CD4-positive, alpha-beta T cell (primary cell): ENCODE measurements at regions of chr11 and their contacts with region 1.

Region 1: GRCh38 chr11:133947321-133947756 is 9.4 kb downstream of the IGSF9B start:
- DNase-seq: peak; percentile 41 to 85 (median 62)
- ATAC-seq: peak; percentile 32
- H3K4me3 ChIP-seq: peak overlapping the region; percentile 30
- H3K4me3 Mint-ChIP-seq: peak overlapping the region; percentile 68
- H3K27ac ChIP-seq: peak overlapping the region in 1 of 2 donors; percentile 47
- H3K27ac Mint-ChIP-seq: peak overlapping the region; percentile 89
- H3K4me1 ChIP-seq: peaks cover 69% of the 10 kb centered on the region
- H3K4me1 Mint-ChIP-seq: peaks cover 69% of the 10 kb centered on the region
- H3K27me3 ChIP-seq: no peaks in the 10 kb centered on the region
- H3K27me3 Mint-ChIP-seq: peaks cover under 1% of the 10 kb centered on the region
- CTCF ChIP-seq: peak; percentile 49

Region 2: DNA sequence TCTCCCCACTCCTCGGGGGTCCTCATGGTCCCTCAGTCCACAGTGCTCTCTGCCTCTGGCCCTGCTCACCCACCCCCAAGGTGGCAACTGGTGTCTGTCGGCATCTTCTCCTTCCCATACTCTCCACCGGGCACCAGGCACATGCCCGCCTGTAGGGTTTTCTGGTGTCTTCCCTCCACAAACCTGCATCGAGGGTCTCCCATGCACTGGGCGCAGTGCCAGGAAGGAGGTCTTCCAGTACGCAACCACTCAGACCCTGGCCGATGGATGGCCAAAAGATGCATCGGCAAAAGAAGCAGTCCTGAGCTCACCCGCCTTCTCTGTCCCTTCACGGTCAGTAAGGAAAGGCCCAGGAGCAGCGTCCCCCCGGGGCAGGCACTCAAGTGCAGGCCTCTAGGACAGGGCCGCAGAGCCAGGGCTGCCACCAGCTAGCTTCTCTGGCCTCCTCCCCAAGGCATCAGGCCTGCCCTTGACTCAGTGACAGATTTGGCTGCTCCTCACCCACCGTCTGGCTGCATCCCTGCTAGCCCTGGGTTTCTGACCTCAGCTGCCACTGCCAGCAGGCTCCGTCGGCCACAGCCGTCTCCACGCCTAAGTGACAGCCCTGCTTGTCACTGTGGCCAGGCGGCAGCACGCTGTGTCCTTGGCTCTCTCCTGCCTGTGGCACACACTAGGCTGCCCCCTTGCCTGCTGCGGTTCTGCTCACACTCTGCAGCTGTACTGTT is 41.5 kb after region 1 on chr11:
- CTCF ChIA-PET with region 1: no interaction called
- POLR2A ChIA-PET with region 1: no interaction called
- intact Hi-C with region 1: loop called in 1 of 2 experiments (anchors 2 kb)
- DNase-seq: no peak
- ATAC-seq: no peak
- H3K4me3 ChIP-seq: no peak overlapping the region
- H3K4me3 Mint-ChIP-seq: no peak overlapping the region
- H3K27ac ChIP-seq: no peak overlapping the region
- H3K27ac Mint-ChIP-seq: no peak overlapping the region
- H3K4me1 ChIP-seq: no peaks in the 10 kb centered on the region
- H3K4me1 Mint-ChIP-seq: no peaks in the 10 kb centered on the region
- H3K27me3 ChIP-seq: no peaks in the 10 kb centered on the region
- H3K27me3 Mint-ChIP-seq: no peaks in the 10 kb centered on the region
- CTCF ChIP-seq: no peak

Region 3: DNA sequence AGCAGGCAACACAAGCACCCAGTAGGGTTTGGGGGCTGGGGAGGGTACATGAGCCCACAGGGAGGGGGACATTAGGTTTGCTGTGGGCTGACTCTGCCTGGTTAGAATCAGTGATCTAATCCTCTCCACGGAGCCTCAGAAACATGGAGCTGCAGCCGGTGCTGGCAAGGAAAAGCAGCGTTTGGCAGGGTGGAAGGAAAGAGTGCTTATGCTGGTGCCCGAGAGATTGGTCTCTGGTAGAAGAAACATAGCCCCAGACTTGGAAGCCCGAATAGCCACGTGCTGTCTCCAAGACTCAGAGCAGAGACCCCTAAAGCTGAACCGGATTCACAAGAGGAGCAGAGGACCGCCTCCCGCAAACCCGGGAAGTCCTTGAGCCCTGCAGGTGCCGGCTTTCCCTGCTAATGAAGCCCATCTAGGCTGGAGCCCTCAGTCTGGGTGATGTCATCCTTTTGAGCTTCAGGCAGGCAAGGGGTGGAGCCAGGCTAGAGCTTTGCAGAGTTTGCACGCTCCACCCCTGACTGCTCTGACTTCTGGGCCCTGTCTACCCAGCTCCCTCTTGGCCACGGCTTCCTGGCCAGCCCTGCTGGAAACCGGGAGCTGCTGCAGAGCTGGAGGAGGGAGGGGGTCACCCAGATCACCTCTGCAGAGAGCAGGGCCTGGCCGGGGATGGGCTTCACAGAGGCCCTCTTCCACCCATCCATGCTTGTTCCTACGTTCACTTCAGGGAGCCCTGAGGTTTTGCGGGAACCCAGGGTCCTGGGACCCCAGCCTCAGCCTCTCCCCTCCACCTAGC is 86.6 kb after region 1 on chr11:
- CTCF ChIA-PET with region 1: interaction called, 3 read pairs
- POLR2A ChIA-PET with region 1: interaction called, 22 read pairs
- intact Hi-C with region 1: loop called (anchors 1 to 5 kb)
- DNase-seq: peak; percentile 47 to 82 (median 62)
- ATAC-seq: peak; percentile 81
- H3K4me3 ChIP-seq: peak overlapping the region; percentile 39
- H3K4me3 Mint-ChIP-seq: peak overlapping the region; percentile 79
- H3K27ac ChIP-seq: no peak overlapping the region
- H3K27ac Mint-ChIP-seq: peak overlapping the region; percentile 81
- H3K4me1 ChIP-seq: peaks cover 53% of the 10 kb centered on the region
- H3K4me1 Mint-ChIP-seq: peaks cover 71% of the 10 kb centered on the region
- H3K27me3 ChIP-seq: no peaks in the 10 kb centered on the region
- H3K27me3 Mint-ChIP-seq: no peaks in the 10 kb centered on the region
- CTCF ChIP-seq: no peak

Region 4: GRCh38 chr11:134062265-134063123 is 115.2 kb after region 1 on chr11:
- CTCF ChIA-PET with region 1: no interaction called
- POLR2A ChIA-PET with region 1: no interaction called
- intact Hi-C with region 1: no loop called
- DNase-seq: no peak
- ATAC-seq: no peak
- H3K4me3 ChIP-seq: no peak overlapping the region
- H3K4me3 Mint-ChIP-seq: no peak overlapping the region
- H3K27ac ChIP-seq: no peak overlapping the region
- H3K27ac Mint-ChIP-seq: no peak overlapping the region
- H3K4me1 ChIP-seq: peaks cover 8% of the 10 kb centered on the region
- H3K4me1 Mint-ChIP-seq: peaks cover 8% of the 10 kb centered on the region
- H3K27me3 ChIP-seq: peaks cover 11 to 22% of the 10 kb centered on the region in 2 experiments
- H3K27me3 Mint-ChIP-seq: peaks cover 45% of the 10 kb centered on the region
- CTCF ChIP-seq: no peak

Region 5: GRCh38 chr11:134331354-134332188 is 384.2 kb after region 1 on chr11 and contains the start of gene GLB1L2:
- CTCF ChIA-PET with region 1: no interaction called
- POLR2A ChIA-PET with region 1: no interaction called
- intact Hi-C with region 1: loop called in 1 of 2 experiments (anchors 5 kb)
- DNase-seq: peak; percentile 65 to 93 (median 77)
- ATAC-seq: peak; percentile 91
- H3K4me3 ChIP-seq: peak within 1 kb of the TSS; percentile 80
- H3K4me3 Mint-ChIP-seq: peak within 1 kb of the TSS; percentile 93
- H3K27ac ChIP-seq: no peak within 1 kb of the TSS
- H3K27ac Mint-ChIP-seq: no peak within 1 kb of the TSS
- H3K4me1 ChIP-seq: peaks cover 22% of the 10 kb centered on the region
- H3K4me1 Mint-ChIP-seq: peaks cover 19% of the 10 kb centered on the region
- H3K27me3 ChIP-seq: peaks cover 0 to 4% of the 10 kb centered on the region in 2 experiments
- H3K27me3 Mint-ChIP-seq: peaks cover 36% of the 10 kb centered on the region
- CTCF ChIP-seq: no peak
- total RNA-seq, gene GLB1L2: 0.59 to 0.63 TPM